CD8-positive, alpha-beta T cell (primary cell): ENCODE measurements at regions of chr1 and their contacts with region 1.

Region 1: GRCh38 chr1:113783254-113784099 is 24.2 kb upstream of the PHTF1 start:
- DNase-seq: peak; percentile 10 to 85 (median 44)
- ATAC-seq: peak; percentile 94
- H3K4me3 ChIP-seq: peak overlapping the region; percentile 13 to 20
- H3K4me3 Mint-ChIP-seq: peak overlapping the region; percentile 61
- H3K27ac ChIP-seq: peak overlapping the region; percentile 38 to 74
- H3K27ac Mint-ChIP-seq: peak overlapping the region; percentile 86
- H3K4me1 ChIP-seq: peaks cover 68% of the 10 kb centered on the region
- H3K4me1 Mint-ChIP-seq: peaks cover 37% of the 10 kb centered on the region
- H3K27me3 ChIP-seq: no peaks in the 10 kb centered on the region
- H3K27me3 Mint-ChIP-seq: no peaks in the 10 kb centered on the region
- CTCF ChIP-seq: no peak

Region 2: DNA sequence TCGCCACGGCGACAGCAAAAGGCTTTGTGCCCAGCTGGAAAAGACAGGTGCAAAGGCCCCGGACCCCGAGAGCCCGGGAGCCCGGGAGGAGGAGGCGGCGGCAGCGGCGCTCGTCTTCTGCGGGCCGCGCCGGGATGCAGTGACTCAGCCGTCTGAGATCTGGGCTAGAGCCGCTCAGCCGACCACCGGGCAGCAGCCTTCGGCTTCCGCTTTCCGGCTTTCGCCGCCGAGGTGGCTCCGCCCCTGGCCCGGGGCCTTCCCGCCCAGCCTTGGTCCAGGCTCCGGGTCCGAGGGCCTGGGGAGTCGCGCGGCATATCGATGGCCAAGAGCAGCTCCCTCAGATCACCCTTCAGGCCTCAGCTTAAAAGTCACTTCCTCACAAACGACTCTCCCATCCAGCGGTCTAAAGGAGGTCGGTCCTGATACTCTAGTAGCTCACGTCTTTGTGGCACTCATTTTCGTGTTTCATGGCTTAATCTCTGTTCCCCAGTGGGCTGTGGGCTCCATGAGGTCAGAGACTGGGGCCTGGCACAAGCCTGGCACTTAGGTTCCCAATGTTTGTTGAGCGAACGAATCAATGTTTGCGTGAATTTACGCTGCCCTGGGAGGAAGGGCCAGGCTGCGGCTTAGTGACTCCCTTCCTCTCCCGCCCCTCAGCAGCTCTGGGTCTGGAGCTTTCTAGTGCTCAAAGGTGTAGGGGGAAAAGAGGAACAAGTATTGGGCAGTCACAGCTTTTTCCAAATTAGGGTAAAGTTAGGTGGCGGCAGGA is 24.0 kb before region 1 on chr1 and contains the start of gene PHTF1:
- CTCF ChIA-PET with region 1: no interaction called
- POLR2A ChIA-PET with region 1: interaction called, 9 read pairs
- intact Hi-C with region 1: loop called (anchors 2 kb)
- DNase-seq: peak; percentile 3 to 77 (median 59)
- ATAC-seq: peak; percentile 73
- H3K4me3 ChIP-seq: peak within 1 kb of the TSS; percentile 84 to 94
- H3K4me3 Mint-ChIP-seq: peak within 1 kb of the TSS; percentile 90
- H3K27ac ChIP-seq: peak within 1 kb of the TSS; percentile 73 to 89
- H3K27ac Mint-ChIP-seq: peak within 1 kb of the TSS; percentile 96
- H3K4me1 ChIP-seq: peaks cover 4% of the 10 kb centered on the region
- H3K4me1 Mint-ChIP-seq: peaks cover 25% of the 10 kb centered on the region
- H3K27me3 ChIP-seq: no peaks in the 10 kb centered on the region
- H3K27me3 Mint-ChIP-seq: no peaks in the 10 kb centered on the region
- CTCF ChIP-seq: no peak
- total RNA-seq, gene PHTF1: 4.4 to 5.4 TPM

Region 3: DNA sequence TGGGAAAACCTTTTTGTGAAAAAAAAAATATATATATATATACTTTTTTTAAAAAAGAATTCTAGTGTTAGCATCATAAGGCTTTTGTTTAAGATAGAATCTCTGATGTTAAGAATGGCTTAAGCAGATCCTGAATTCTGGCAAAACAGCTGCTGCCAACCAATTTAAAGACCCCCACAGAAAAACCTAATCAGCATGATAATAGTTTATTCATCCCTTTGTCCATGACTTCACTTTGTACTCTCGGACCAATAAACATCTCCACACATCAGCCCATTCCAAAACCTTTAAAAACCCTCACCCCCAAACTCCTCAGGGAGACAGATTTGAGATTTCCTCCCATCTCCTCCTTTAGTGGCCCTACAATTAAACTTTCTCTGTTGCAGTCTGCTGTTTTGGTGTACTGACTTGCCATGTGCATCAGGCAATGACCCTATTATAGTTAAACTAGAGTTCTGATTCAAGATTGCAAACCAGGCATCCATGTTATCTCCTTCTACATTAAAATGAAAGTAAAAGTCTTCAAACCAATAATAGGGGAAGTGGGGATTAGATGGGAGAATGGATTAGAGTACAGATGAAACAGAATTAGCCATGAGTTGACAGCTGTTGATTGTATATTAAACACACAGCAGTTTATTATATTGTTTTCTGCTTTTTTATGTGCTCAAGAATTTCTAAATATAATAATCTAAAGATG is 14.4 kb before region 1 on chr1:
- CTCF ChIA-PET with region 1: no interaction called
- POLR2A ChIA-PET with region 1: no interaction called
- intact Hi-C with region 1: loop called in 1 of 2 experiments (anchors 2 kb)
- DNase-seq: no peak
- ATAC-seq: no peak
- H3K4me3 ChIP-seq: no peak overlapping the region
- H3K4me3 Mint-ChIP-seq: no peak overlapping the region
- H3K27ac ChIP-seq: no peak overlapping the region
- H3K27ac Mint-ChIP-seq: peak overlapping the region; percentile 66
- H3K4me1 ChIP-seq: peaks cover 3% of the 10 kb centered on the region
- H3K4me1 Mint-ChIP-seq: peaks cover 39% of the 10 kb centered on the region
- H3K27me3 ChIP-seq: no peaks in the 10 kb centered on the region
- H3K27me3 Mint-ChIP-seq: no peaks in the 10 kb centered on the region
- CTCF ChIP-seq: no peak

Region 4: GRCh38 chr1:113793878-113794834 is 10.7 kb after region 1 on chr1:
- CTCF ChIA-PET with region 1: interaction called, 4 read pairs
- POLR2A ChIA-PET with region 1: interaction called, 5 read pairs
- intact Hi-C with region 1: loop called in 1 of 2 experiments (anchors 2 kb)
- DNase-seq: no peak
- ATAC-seq: no peak
- H3K4me3 ChIP-seq: no peak overlapping the region
- H3K4me3 Mint-ChIP-seq: no peak overlapping the region
- H3K27ac ChIP-seq: peak overlapping the region in 1 of 2 experiments; percentile 9
- H3K27ac Mint-ChIP-seq: peak overlapping the region; percentile 81
- H3K4me1 ChIP-seq: peaks cover 27% of the 10 kb centered on the region
- H3K4me1 Mint-ChIP-seq: peaks cover 67% of the 10 kb centered on the region
- H3K27me3 ChIP-seq: no peaks in the 10 kb centered on the region
- H3K27me3 Mint-ChIP-seq: no peaks in the 10 kb centered on the region
- CTCF ChIP-seq: no peak

Region 5: DNA sequence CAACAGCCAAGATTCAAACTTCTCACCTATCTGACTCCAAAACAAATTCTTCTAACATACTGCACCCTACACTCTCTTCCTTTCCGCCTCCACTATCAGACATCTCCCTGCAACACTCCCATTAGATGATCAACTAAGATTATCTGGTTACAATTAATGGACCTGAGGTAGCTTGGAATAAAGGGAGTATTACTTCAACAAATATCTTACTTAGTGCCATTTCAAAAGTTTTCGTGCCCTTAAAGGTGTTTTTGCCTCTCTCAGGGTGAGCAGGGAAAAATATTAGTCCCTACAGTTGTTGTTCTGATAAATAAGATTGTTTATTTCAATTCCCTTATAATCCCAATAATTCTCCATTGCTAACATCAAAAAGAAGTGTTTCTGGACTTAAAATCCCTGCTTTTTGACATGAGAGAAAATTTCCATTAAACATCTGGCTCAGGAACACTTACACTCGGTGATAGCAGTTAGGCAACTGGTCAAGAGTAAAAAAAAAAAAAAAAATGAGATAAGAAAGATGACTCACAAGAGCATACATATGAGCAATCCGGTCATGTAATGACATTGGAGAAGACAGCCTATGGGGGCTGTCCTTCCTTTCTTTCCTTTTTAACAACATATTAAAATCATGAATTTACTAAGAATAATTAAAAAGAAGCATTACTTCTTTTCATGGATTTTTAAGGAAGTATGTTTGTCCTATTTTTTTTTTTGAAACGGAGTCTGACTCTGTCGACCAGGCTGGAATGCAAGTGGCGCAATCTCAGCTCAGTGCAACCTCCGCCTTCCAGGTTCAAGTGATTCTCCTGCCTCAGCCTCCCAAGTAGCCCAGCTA is 21.2 kb after region 1 on chr1:
- CTCF ChIA-PET with region 1: no interaction called
- POLR2A ChIA-PET with region 1: interaction called, 5 read pairs
- intact Hi-C with region 1: loop called in 1 of 2 experiments (anchors 2 kb)
- DNase-seq: no peak
- ATAC-seq: no peak
- H3K4me3 ChIP-seq: no peak overlapping the region
- H3K4me3 Mint-ChIP-seq: no peak overlapping the region
- H3K27ac ChIP-seq: no peak overlapping the region
- H3K27ac Mint-ChIP-seq: no peak overlapping the region
- H3K4me1 ChIP-seq: peaks cover 63% of the 10 kb centered on the region
- H3K4me1 Mint-ChIP-seq: peaks cover 79% of the 10 kb centered on the region
- H3K27me3 ChIP-seq: no peaks in the 10 kb centered on the region
- H3K27me3 Mint-ChIP-seq: no peaks in the 10 kb centered on the region
- CTCF ChIP-seq: no peak